Activated T-helper 1 cell treated with anti-CD3 and anti-CD28 coated beads, Interleukin-12 subunit alpha, Interleukin-12 subunit beta, Interleukin-2, Interleukin-4 antibody, amounts not matched to agents 30 ng/mL and 10 ng/mL and 1 ng/mL, durations not matched to agents 14 hours and 24 hours and 36 hours (primary cell): ENCODE measurements at regions of chr9 and their contacts with region 1.

Region 1: DNA sequence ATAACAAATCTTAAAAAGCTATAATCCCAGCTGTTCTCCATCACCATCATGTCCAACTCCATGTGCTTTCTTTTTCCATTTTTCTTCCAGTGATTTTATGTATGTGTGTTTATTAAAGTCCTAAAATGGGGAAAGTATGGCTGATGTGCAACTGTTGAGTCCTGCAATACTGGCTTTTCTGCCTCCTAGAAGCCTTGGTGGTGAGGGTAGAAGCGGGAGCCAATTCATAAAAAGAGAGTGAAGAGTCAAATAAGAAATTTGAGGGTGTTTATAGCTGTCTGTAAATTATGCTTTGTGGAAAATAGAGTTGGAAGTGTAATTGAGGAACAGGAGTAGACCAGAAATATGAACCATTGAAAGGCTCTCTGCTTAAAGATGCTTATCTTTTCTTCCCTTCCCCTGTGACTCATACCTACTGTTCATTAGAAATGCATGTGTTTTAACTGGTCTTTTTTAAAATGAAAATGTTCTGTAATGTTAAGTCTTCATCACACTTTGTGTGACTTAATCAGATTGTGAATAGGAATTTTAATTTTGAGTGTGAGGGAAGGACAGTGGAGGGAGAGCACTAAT is 80.1 kb downstream of the ZCCHC7 start:
- DNase-seq: no peak
- H3K4me3 Mint-ChIP-seq: peak overlapping the region; percentile 20
- H3K27ac Mint-ChIP-seq: peak overlapping the region; percentile 9
- H3K4me1 Mint-ChIP-seq: peaks cover 49% of the 10 kb centered on the region
- H3K27me3 Mint-ChIP-seq: no peaks in the 10 kb centered on the region

Region 2: GRCh38 chr9:36924071-36924470 is 276.4 kb before region 1 on chr9:
- intact Hi-C with region 1: loop called (anchors 2 kb)
- DNase-seq: peak; percentile 12
- H3K4me3 Mint-ChIP-seq: no peak overlapping the region
- H3K27ac Mint-ChIP-seq: peak overlapping the region; percentile 77
- H3K4me1 Mint-ChIP-seq: peaks cover 58% of the 10 kb centered on the region
- H3K27me3 Mint-ChIP-seq: no peaks in the 10 kb centered on the region

Region 3: GRCh38 chr9:37144762-37145161 is 55.8 kb before region 1 on chr9:
- intact Hi-C with region 1: loop called (anchors 2 kb)
- DNase-seq: no peak
- H3K4me3 Mint-ChIP-seq: no peak overlapping the region
- H3K27ac Mint-ChIP-seq: no peak overlapping the region
- H3K4me1 Mint-ChIP-seq: peaks cover 19% of the 10 kb centered on the region
- H3K27me3 Mint-ChIP-seq: no peaks in the 10 kb centered on the region

Region 4: DNA sequence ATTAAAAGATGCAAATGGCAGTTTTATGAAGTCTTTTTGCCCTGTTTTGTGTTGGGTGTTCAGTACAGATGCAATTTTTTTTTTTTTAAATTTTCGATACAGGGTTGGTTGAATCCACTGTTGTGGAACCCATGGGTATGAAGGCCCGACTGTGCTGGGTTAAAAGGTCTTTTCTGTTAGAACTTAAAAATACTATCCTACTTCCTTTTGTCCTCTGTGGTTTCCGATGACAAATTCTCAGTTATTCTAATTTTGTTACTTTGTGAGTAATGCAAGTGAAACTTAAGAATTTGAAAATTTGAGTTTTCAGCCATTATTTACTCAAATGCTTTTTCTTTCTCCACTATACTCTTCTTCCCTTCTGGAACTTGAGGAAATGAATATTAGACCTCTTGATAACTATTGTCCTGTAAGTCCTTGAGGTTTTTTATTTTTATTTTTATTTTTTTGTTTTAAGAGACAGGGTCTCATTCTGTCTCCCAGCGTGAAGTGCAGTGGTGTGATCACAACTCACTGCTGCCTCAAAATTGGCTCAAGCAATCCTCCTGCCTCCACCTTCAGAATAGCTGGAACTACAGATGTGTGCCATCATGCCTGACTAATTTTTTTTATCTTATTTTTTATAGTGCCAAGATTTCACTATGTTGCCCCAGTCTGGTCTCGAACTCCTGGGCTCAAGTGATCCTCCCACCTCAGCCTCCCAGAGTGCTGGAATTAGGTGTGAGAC is 12.6 kb before region 1 on chr9:
- intact Hi-C with region 1: loop called (anchors 2 kb)
- DNase-seq: no peak
- H3K4me3 Mint-ChIP-seq: peak overlapping the region; percentile 79
- H3K27ac Mint-ChIP-seq: peak overlapping the region; percentile 90
- H3K4me1 Mint-ChIP-seq: peaks cover 24% of the 10 kb centered on the region
- H3K27me3 Mint-ChIP-seq: no peaks in the 10 kb centered on the region

Region 5: DNA sequence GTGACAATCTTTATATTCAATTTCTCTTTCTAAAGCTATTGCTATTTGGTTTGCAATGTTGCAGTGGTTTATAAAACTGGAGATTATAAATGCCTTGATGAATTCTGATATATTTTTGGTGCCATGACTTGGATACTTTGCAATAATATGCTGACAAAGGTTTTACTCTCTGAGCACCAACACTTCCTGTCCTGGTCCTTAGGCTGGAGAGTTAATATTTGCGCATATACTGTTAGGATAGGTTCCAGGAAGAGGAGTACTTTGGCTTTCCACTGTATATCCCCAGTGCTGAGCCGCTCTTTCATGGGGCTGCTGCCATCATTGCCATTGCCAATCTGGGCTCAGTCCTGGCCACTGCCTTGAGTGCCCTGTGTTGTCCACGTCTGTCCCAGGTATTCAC is 59.4 kb after region 1 on chr9:
- intact Hi-C with region 1: no loop called
- DNase-seq: no peak
- H3K4me3 Mint-ChIP-seq: no peak overlapping the region
- H3K27ac Mint-ChIP-seq: no peak overlapping the region
- H3K4me1 Mint-ChIP-seq: no peaks in the 10 kb centered on the region
- H3K27me3 Mint-ChIP-seq: no peaks in the 10 kb centered on the region